AG04449 (cell line): ENCODE measurements at regions of chr3 and their contacts with region 1.

Region 1: DNA sequence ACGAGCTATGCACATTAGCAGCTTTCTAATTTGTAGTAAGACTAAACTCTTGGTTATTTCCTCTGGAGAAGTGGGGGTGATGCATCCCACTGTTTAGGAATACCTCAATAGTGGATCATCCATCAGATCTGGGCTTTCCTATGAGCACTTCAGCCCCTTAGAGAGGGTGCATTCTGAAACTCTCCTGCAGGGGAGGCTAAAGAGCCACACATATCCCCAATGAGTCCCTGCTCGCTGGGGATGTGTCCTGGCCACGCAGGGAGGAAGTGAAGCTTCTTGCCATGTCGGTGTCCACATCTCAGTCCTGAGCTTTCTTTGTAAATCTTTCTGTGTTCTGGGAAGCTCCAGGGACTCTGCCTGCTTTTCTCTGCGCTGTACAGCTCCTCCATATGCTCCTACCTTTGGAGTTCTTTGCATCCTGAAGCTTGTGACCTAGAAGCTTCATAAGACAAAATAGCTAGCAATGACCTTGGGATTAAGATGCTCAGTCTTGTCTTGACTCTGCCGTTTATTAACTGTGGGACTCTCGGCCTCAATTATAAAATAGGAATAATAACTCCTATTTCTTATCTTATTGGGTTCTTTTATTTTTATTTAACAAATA is 28.3 kb upstream of the MASP1 start:
- DNase-seq: no peak
- H3K4me3 ChIP-seq: no peak overlapping the region
- CTCF ChIP-seq: peak; percentile 86

Region 2: DNA sequence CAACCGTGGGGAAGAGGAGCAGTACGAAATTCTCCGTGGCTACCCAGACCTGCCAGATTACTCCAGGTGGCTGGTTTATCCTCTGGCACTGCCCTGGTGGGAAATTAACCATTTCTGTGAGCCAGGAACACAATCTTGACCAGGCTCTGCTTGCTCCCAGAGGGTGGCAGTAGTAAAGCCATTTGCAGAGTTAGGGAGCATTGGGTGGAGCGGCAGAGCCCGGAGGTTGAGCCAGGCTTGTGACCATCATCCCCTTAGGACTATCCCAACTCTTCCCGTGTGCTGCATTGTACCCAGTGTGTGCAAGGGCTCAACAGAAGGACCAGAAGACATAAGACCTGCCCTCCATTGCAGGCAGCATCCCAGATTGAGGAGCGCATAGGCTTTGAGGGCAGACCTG is 597.3 kb before region 1 on chr3:
- CTCF ChIA-PET with region 1: no interaction called
- POLR2A ChIA-PET with region 1: no interaction called
- DNase-seq: no peak
- H3K4me3 ChIP-seq: no peak overlapping the region
- CTCF ChIP-seq: peak; percentile 26

Region 3: DNA sequence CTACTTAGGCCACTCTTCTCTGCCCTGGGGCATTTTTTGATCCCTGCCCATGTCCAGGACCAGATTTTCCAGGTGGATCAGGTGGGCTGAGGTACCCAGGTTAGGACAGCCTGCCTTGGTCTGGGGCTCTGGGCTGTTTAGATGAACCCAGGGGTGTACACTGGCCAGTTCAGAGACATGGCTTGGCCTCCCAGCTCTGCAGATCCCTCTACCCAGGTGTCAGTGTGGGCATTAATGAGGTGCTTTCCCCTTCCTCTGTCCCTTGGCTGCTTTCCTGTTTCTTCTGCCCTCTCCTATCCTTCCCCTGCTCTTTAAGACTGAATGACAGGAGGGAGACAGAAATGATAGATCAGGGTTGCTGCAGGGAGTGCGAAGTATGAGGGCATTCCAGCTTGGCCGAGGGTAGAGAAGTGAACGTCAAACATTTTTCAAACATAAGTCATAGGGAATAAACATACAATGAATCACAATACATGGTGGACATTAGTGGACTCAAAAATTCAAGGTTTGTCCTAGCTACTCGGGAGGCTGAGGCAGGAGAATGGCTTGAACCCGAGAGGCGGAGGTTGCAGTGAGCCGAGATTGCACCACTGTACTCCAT is 92.0 kb before region 1 on chr3:
- CTCF ChIA-PET with region 1: interaction called, 442 read pairs
- POLR2A ChIA-PET with region 1: no interaction called
- DNase-seq: peak; percentile 46
- H3K4me3 ChIP-seq: no peak overlapping the region
- CTCF ChIP-seq: no peak

Region 4: GRCh38 chr3:187352581-187353575 is 33.1 kb after region 1 on chr3:
- CTCF ChIA-PET with region 1: interaction called, 10 read pairs
- POLR2A ChIA-PET with region 1: no interaction called
- DNase-seq: no peak
- H3K4me3 ChIP-seq: no peak overlapping the region
- CTCF ChIP-seq: no peak

Region 5: DNA sequence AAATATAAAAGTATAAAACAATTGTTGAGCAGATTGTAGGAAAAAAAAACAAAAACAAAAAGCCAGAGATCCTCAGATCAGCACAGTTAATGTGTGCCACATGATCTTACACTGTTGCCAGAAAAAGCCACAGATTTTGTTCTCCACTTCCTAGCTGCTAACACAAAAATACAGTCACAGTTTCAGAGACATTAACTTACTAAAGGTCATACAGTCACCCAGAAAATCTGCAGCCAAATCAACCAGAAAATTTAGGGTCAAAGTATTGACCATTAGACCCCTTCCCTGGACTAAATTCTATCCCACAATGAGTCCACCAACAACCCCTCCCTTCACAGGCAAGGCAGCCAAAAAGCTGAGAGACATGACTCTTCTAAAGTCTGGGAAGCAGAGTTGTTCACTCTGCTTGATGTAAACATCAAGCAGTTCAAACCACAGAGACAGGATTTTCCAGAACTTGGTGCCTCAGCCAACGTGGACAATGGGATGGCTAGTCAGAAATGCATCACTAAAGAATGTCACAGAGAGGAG is 291.2 kb after region 1 on chr3:
- CTCF ChIA-PET with region 1: interaction called, 41 read pairs
- POLR2A ChIA-PET with region 1: no interaction called
- DNase-seq: no peak
- H3K4me3 ChIP-seq: no peak overlapping the region
- CTCF ChIP-seq: no peak

Region 6: GRCh38 chr3:187662848-187663409 is 343.1 kb after region 1 on chr3:
- CTCF ChIA-PET with region 1: interaction called, 1,530 read pairs
- POLR2A ChIA-PET with region 1: no interaction called
- DNase-seq: no peak
- H3K4me3 ChIP-seq: no peak overlapping the region
- CTCF ChIP-seq: no peak

Region 7: DNA sequence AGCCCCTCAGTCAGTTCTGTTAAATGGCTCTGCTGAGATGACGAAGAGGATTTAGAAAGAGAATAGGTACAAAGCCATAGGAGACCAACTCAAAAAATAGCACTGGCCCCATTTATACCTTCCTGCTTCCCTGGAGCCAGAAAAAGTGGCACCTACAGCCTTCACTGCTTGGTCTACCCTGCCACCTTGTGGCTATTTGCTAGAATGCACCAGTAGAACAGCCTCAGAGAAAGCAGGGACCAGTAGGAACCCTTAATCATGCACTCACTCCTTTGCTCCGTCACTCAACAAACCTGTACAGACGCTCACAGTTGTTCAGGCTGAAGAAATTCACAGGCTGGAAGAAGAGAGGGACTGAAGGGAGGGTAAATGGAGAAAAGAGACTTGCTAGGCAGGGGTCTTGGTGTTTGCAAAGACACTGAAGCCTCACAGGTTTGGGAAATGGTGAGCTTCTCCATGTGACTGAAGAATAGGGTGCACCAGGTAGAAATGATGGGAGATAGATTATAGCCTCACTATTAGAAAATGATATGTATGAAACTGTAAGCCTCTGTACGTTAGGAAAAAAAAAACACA is 394.7 kb after region 1 on chr3:
- CTCF ChIA-PET with region 1: interaction called, 190 read pairs
- POLR2A ChIA-PET with region 1: no interaction called
- DNase-seq: no peak
- H3K4me3 ChIP-seq: no peak overlapping the region
- CTCF ChIP-seq: peak; percentile 90